CD14-positive monocyte (primary cell): ENCODE measurements at regions of chr2 and their contacts with region 1.

Region 1: GRCh38 chr2:149597668-149598326 is 10.2 kb upstream of the MMADHC start:
- DNase-seq: peak; percentile 40 to 71 (median 62)
- H3K4me3 ChIP-seq: no peak overlapping the region
- H3K4me3 Mint-ChIP-seq: no peak overlapping the region
- H3K27ac ChIP-seq: no peak overlapping the region
- H3K27ac Mint-ChIP-seq: peak overlapping the region in 1 of 7 donors; percentile 42
- H3K4me1 ChIP-seq: peaks cover 5 to 7% of the 10 kb centered on the region in 2 donors
- H3K4me1 Mint-ChIP-seq: peaks cover 14% of the 10 kb centered on the region
- H3K27me3 ChIP-seq: peaks cover 2 to 3% of the 10 kb centered on the region in 2 donors
- H3K27me3 Mint-ChIP-seq: peaks cover 2 to 7% (median 3%) of the 10 kb centered on the region in 3 donors
- CTCF ChIP-seq: peak; percentile 79

Region 2: DNA sequence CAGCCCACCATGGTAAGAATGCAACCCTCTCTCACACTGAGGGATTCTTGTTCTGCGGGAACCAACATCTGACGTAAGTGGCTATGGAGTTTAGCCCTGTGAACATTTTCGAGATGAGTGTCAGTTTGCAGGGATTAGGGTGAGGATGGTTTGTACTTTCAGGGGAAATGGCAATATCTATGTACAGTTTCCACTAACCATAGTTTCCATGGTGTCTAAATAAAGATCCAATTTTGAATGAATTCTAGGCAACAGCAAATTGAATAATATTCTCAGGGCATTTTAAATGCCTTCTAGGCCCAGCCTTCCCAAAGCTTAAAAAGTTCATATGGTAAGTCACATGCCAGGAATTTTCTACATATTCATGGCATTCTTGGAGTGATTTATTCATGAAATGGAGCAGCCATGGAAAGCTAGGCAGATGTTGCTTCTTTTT is 95.2 kb after region 1 on chr2:
- intact Hi-C with region 1: no loop called
- DNase-seq: no peak
- H3K4me3 ChIP-seq: no peak overlapping the region
- H3K4me3 Mint-ChIP-seq: no peak overlapping the region
- H3K27ac ChIP-seq: no peak overlapping the region
- H3K27ac Mint-ChIP-seq: no peak overlapping the region
- H3K4me1 ChIP-seq: no peaks in the 10 kb centered on the region
- H3K4me1 Mint-ChIP-seq: no peaks in the 10 kb centered on the region
- H3K27me3 ChIP-seq: no peaks in the 10 kb centered on the region
- H3K27me3 Mint-ChIP-seq: peaks cover 0 to 1% (median 0%) of the 10 kb centered on the region in 3 donors
- CTCF ChIP-seq: no peak

Region 3: GRCh38 chr2:151051574-151052220 is 1453.9 kb after region 1 on chr2:
- intact Hi-C with region 1: loop called (anchors 5 to 10 kb)
- DNase-seq: peak; percentile 14 to 33 (median 30)
- H3K4me3 ChIP-seq: no peak overlapping the region
- H3K4me3 Mint-ChIP-seq: no peak overlapping the region
- H3K27ac ChIP-seq: no peak overlapping the region
- H3K27ac Mint-ChIP-seq: no peak overlapping the region
- H3K4me1 ChIP-seq: peaks cover 0 to 1% of the 10 kb centered on the region in 2 donors
- H3K4me1 Mint-ChIP-seq: no peaks in the 10 kb centered on the region
- H3K27me3 ChIP-seq: no peaks in the 10 kb centered on the region
- H3K27me3 Mint-ChIP-seq: peaks cover 0 to 5% (median 2%) of the 10 kb centered on the region in 3 donors
- CTCF ChIP-seq: peak; percentile 89

Region 4: DNA sequence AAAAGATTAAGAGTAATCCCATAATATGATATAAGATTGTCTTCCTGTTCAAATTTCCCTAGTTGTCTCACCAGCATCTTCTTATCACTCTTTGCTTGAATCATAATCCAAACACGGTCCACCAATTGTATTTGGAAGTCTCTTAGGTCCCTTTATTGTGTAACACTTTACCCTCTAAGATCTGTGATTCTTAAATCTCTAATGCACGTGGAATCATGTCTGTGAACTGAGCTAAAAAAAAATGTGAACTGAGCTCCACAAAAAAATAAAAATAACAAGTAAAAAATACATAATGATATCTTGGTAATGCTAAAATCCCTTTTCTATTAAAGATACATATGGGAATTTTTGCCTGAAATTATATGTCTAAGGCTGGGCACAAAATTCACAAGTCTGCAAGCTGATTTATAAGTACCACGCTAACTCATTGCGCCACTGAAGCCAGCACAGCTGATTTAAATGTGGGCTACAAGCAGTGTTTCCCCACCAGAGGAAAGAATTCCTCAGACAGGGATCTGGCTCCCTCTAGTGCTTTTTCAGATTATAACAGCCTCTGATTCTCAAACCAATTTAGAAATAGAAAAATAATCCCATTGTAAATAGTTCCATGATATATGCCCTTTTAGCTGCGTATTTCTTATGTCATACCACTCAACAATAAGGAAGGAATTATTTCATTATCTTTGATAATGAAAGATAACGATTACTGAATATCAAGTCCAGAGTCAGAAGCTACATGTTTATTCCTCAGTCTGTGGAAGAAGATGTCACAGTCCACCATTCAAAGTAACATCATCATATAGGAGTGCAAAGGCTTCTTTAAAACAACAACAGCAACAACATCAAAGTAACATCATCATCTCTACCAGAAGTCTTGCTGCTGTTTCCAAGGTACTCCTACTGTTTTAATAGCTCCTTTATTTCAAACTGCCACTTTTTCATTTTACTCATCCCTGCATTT is 1641.0 kb after region 1 on chr2:
- intact Hi-C with region 1: loop called (anchors 5 to 10 kb)
- DNase-seq: peak; percentile 57 to 76 (median 76)
- H3K4me3 ChIP-seq: no peak overlapping the region
- H3K4me3 Mint-ChIP-seq: no peak overlapping the region
- H3K27ac ChIP-seq: no peak overlapping the region
- H3K27ac Mint-ChIP-seq: peak overlapping the region in 1 of 7 donors; percentile 67
- H3K4me1 ChIP-seq: peaks cover 8 to 14% of the 10 kb centered on the region in 2 donors
- H3K4me1 Mint-ChIP-seq: peaks cover 13% of the 10 kb centered on the region
- H3K27me3 ChIP-seq: no peaks in the 10 kb centered on the region
- H3K27me3 Mint-ChIP-seq: peaks cover 0 to 4% (median 3%) of the 10 kb centered on the region in 3 donors
- CTCF ChIP-seq: peak; percentile 92

Region 5: DNA sequence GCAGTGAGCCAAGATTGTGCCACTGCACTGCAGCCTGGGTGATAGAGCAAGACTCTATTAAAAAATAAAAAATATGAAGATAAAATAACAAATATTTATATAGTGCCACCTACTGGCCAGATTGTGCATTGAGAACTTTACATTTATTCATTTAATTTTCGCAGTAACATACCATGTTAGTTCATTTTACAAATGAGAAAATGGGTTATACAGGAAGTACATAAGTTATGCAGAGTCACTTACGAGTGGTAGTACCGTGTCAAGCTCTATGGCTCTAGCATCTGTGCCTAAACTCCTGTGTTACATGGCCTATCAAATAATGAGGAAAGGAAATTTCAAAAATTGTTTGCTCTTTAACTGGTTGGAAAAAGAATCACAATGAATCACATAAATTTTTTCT is 1839.8 kb after region 1 on chr2:
- intact Hi-C with region 1: loop called in 1 of 2 experiments (anchors 10 kb)
- DNase-seq: peak; percentile 10 to 41 (median 24)
- H3K4me3 ChIP-seq: no peak overlapping the region
- H3K4me3 Mint-ChIP-seq: no peak overlapping the region
- H3K27ac ChIP-seq: peak overlapping the region in 1 of 2 donors; percentile 14
- H3K27ac Mint-ChIP-seq: peak overlapping the region in 2 of 7 donors; percentile 22 to 26
- H3K4me1 ChIP-seq: no peaks in the 10 kb centered on the region
- H3K4me1 Mint-ChIP-seq: no peaks in the 10 kb centered on the region
- H3K27me3 ChIP-seq: no peaks in the 10 kb centered on the region
- H3K27me3 Mint-ChIP-seq: peaks cover 0 to 2% (median 0%) of the 10 kb centered on the region in 3 donors
- CTCF ChIP-seq: peak; percentile 87